ENCODE measurements at regions of chr10 and their contacts with region 1.

Region 1: GRCh38 chr10:52379287-52379686 is 65.2 kb downstream of the DKK1 start:
- DNase-seq: no peak
- H3K4me3 ChIP-seq: no peak overlapping the region
- H3K4me3 Mint-ChIP-seq: peak overlapping the region; percentile 54
- H3K27ac Mint-ChIP-seq: peak overlapping the region; percentile 80
- H3K4me1 ChIP-seq: peaks cover 69% of the 10 kb centered on the region
- H3K4me1 Mint-ChIP-seq: peaks cover 47% of the 10 kb centered on the region
- H3K27me3 ChIP-seq: no peaks in the 10 kb centered on the region
- H3K27me3 Mint-ChIP-seq: no peaks in the 10 kb centered on the region
- CTCF ChIP-seq: no peak

Region 2: GRCh38 chr10:52232561-52233350 is 146.5 kb before region 1 on chr10:
- CTCF ChIA-PET with region 1: no interaction called
- POLR2A ChIA-PET with region 1: no interaction called
- intact Hi-C with region 1: no loop called
- DNase-seq: no peak
- H3K4me3 ChIP-seq: peak overlapping the region; percentile 15
- H3K4me3 Mint-ChIP-seq: peak overlapping the region; percentile 75
- H3K27ac Mint-ChIP-seq: peak overlapping the region; percentile 69
- H3K4me1 ChIP-seq: peaks cover 9% of the 10 kb centered on the region; the same call in 1 of the 2 replicates
- H3K4me1 Mint-ChIP-seq: peaks cover 11% of the 10 kb centered on the region
- H3K27me3 ChIP-seq: no peaks in the 10 kb centered on the region
- H3K27me3 Mint-ChIP-seq: no peaks in the 10 kb centered on the region
- CTCF ChIP-seq: no peak

Region 3: GRCh38 chr10:52313933-52314816 is 65.1 kb before region 1 on chr10 and contains the start of gene DKK1:
- CTCF ChIA-PET with region 1: interaction called, 9 read pairs
- POLR2A ChIA-PET with region 1: interaction called, 10 read pairs
- intact Hi-C with region 1: loop called (anchors 1 kb)
- DNase-seq: peak; percentile 99 to 100
- H3K4me3 ChIP-seq: peak within 1 kb of the TSS; percentile 63
- H3K4me3 Mint-ChIP-seq: peak within 1 kb of the TSS; percentile 96
- H3K27ac Mint-ChIP-seq: peak within 1 kb of the TSS; percentile 95
- H3K4me1 ChIP-seq: peaks cover 40% of the 10 kb centered on the region
- H3K4me1 Mint-ChIP-seq: peaks cover 33% of the 10 kb centered on the region
- H3K27me3 ChIP-seq: no peaks in the 10 kb centered on the region
- H3K27me3 Mint-ChIP-seq: no peaks in the 10 kb centered on the region
- CTCF ChIP-seq: peak; percentile 99
- total RNA-seq, gene DKK1: 1,709 and 1,866 TPM in 2 replicates

Region 4: GRCh38 chr10:52443419-52444388 is 64.4 kb after region 1 on chr10:
- CTCF ChIA-PET with region 1: no interaction called
- POLR2A ChIA-PET with region 1: no interaction called
- intact Hi-C with region 1: loop called (anchors 1 kb)
- DNase-seq: peak in 1 of 2 experiments; percentile 71
- H3K4me3 ChIP-seq: no peak overlapping the region
- H3K4me3 Mint-ChIP-seq: peak overlapping the region; percentile 29
- H3K27ac Mint-ChIP-seq: peak overlapping the region; percentile 83
- H3K4me1 ChIP-seq: peaks cover 57% of the 10 kb centered on the region
- H3K4me1 Mint-ChIP-seq: peaks cover 39% of the 10 kb centered on the region
- H3K27me3 ChIP-seq: no peaks in the 10 kb centered on the region
- H3K27me3 Mint-ChIP-seq: no peaks in the 10 kb centered on the region
- CTCF ChIP-seq: no peak

Region 5: GRCh38 chr10:52637592-52637991 is 258.3 kb after region 1 on chr10:
- CTCF ChIA-PET with region 1: no interaction called
- POLR2A ChIA-PET with region 1: no interaction called
- intact Hi-C with region 1: loop called (anchors 2 kb)
- DNase-seq: peak; percentile 86 to 89
- H3K4me3 ChIP-seq: no peak overlapping the region
- H3K4me3 Mint-ChIP-seq: peak overlapping the region; percentile 14
- H3K27ac Mint-ChIP-seq: peak overlapping the region; percentile 57
- H3K4me1 ChIP-seq: peaks cover 34% of the 10 kb centered on the region
- H3K4me1 Mint-ChIP-seq: peaks cover 40% of the 10 kb centered on the region
- H3K27me3 ChIP-seq: no peaks in the 10 kb centered on the region
- H3K27me3 Mint-ChIP-seq: no peaks in the 10 kb centered on the region
- CTCF ChIP-seq: no peak